Caco-2 (cell line): ENCODE measurements at regions of chr15 and their contacts with region 1.

Region 1: GRCh38 chr15:58604455-58604925 is 145.0 kb downstream of the ADAM10 start:
- DNase-seq: peak; percentile 78 to 87
- H3K4me3 ChIP-seq: no peak overlapping the region
- H3K4me3 Mint-ChIP-seq: peak overlapping the region; percentile 17
- H3K27ac Mint-ChIP-seq: peak overlapping the region; percentile 60
- H3K4me1 ChIP-seq: peaks cover 17% of the 10 kb centered on the region
- H3K4me1 Mint-ChIP-seq: peaks cover 23% of the 10 kb centered on the region
- H3K27me3 ChIP-seq: no peaks in the 10 kb centered on the region
- H3K27me3 Mint-ChIP-seq: no peaks in the 10 kb centered on the region
- CTCF ChIP-seq: no peak

Region 2: GRCh38 chr15:58535894-58536293 is 68.6 kb before region 1 on chr15:
- CTCF ChIA-PET with region 1: no interaction called
- POLR2A ChIA-PET with region 1: no interaction called
- intact Hi-C with region 1: loop called (anchors 1 kb)
- DNase-seq: no peak
- H3K4me3 ChIP-seq: no peak overlapping the region
- H3K4me3 Mint-ChIP-seq: no peak overlapping the region
- H3K27ac Mint-ChIP-seq: peak overlapping the region; percentile 45
- H3K4me1 ChIP-seq: peaks cover 38% of the 10 kb centered on the region
- H3K4me1 Mint-ChIP-seq: peaks cover 51% of the 10 kb centered on the region
- H3K27me3 ChIP-seq: no peaks in the 10 kb centered on the region
- H3K27me3 Mint-ChIP-seq: no peaks in the 10 kb centered on the region
- CTCF ChIP-seq: no peak

Region 3: GRCh38 chr15:58551764-58552504 is 52.6 kb before region 1 on chr15:
- CTCF ChIA-PET with region 1: no interaction called
- POLR2A ChIA-PET with region 1: no interaction called
- intact Hi-C with region 1: no loop called
- DNase-seq: peak in 1 of 2 experiments; percentile 7
- H3K4me3 ChIP-seq: no peak overlapping the region
- H3K4me3 Mint-ChIP-seq: no peak overlapping the region
- H3K27ac Mint-ChIP-seq: peak overlapping the region; percentile 78
- H3K4me1 ChIP-seq: peaks cover 22% of the 10 kb centered on the region
- H3K4me1 Mint-ChIP-seq: peaks cover 45% of the 10 kb centered on the region
- H3K27me3 ChIP-seq: no peaks in the 10 kb centered on the region
- H3K27me3 Mint-ChIP-seq: no peaks in the 10 kb centered on the region
- CTCF ChIP-seq: no peak

Region 4: DNA sequence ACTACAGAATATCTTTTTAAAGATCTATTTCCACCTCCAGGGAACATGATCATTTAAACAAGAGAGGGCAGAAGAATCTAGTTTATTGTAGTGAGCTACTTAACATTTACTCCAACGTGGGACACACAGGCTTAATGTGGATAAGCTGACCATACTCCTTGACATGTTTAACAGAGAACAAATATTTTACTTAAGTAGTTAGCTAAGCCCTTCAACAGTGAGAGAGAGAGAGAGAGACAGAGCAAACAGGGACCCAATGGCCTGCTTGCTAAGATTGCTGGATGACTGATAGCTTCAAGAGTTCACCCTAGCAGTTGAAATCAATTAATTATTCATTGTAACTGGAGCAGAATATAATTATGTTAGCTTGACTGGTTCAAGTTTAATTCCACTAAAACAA is 13.6 kb before region 1 on chr15:
- CTCF ChIA-PET with region 1: interaction called, 4 read pairs
- POLR2A ChIA-PET with region 1: no interaction called
- intact Hi-C with region 1: loop called (anchors 1 kb)
- DNase-seq: no peak
- H3K4me3 ChIP-seq: no peak overlapping the region
- H3K4me3 Mint-ChIP-seq: peak overlapping the region; percentile 51
- H3K27ac Mint-ChIP-seq: peak overlapping the region; percentile 85
- H3K4me1 ChIP-seq: peaks cover 56% of the 10 kb centered on the region
- H3K4me1 Mint-ChIP-seq: peaks cover 30% of the 10 kb centered on the region
- H3K27me3 ChIP-seq: no peaks in the 10 kb centered on the region
- H3K27me3 Mint-ChIP-seq: no peaks in the 10 kb centered on the region
- CTCF ChIP-seq: no peak